IMR-90 (cell line): ENCODE measurements at regions of chr12 and their contacts with region 1.

Region 1: DNA sequence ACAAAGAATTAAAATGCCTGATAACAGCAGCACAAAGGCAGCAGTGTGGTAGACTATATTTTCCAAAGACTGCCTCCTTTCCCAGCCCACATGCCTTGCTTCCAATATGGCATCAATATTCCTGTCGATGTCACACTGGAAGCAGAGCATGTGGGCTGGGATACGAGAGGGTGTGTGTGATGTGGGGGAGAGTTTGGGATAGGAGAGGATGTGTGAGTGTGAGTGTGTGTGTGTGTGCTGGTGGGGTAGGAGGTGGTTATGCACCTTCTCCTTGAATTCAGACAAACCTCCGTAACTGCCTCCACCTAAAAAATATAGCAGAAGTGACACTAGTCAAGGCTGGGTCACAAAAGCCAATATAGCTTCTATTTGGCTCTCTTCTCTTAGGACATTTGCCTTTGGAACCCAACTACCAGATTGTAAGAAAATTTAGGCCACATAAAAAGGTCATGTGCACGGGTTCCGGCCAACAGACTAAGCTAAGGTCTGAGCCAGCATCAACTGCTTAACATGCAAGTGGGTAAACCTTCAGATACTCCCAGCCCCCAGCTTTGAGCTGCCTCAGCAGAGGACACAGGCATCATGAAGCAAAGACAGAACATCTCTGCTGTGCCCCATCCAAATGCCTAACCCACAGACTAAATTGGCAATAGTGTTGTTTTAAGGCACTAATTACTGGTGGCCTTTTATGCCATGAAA is 29.5 kb downstream of the SPPL3 start:
- DNase-seq: no peak
- ATAC-seq: no peak
- H3K4me3 ChIP-seq: no peak overlapping the region
- H3K27ac ChIP-seq: no peak overlapping the region
- H3K4me1 ChIP-seq: peaks cover 1% of the 10 kb centered on the region; the same call in 1 of the 2 replicates
- H3K27me3 ChIP-seq: no peaks in the 10 kb centered on the region
- CTCF ChIP-seq: no peak
- POLR2A ChIP-seq: no peak
- RAD21 ChIP-seq: no peak

Region 2: GRCh38 chr12:120833849-120834248 is 40.8 kb before region 1 on chr12:
- CTCF ChIA-PET with region 1: no interaction called
- POLR2A ChIA-PET with region 1: no interaction called
- dilution Hi-C with region 1: no loop called
- in situ Hi-C with region 1: no loop called
- intact Hi-C with region 1: loop called (anchors 5 kb)
- DNase-seq: peak; percentile 64
- ATAC-seq: no peak; the same call in 1 of the 2 replicates
- H3K4me3 ChIP-seq: no peak overlapping the region
- H3K27ac ChIP-seq: no peak overlapping the region
- H3K4me1 ChIP-seq: peaks cover 6% of the 10 kb centered on the region
- H3K27me3 ChIP-seq: no peaks in the 10 kb centered on the region
- CTCF ChIP-seq: no peak
- POLR2A ChIP-seq: no peak
- RAD21 ChIP-seq: no peak